Mammary epithelial cell (primary cell): ENCODE measurements at regions of chr2 and their contacts with region 1.

Region 1: GRCh38 chr2:45806563-45807358 is 155.3 kb downstream of the PRKCE start:
- DNase-seq: no peak
- H3K4me3 ChIP-seq: no peak overlapping the region
- H3K27ac ChIP-seq: no peak overlapping the region
- H3K4me1 ChIP-seq: peaks cover under 1% of the 10 kb centered on the region
- H3K27me3 ChIP-seq: no peaks in the 10 kb centered on the region
- CTCF ChIP-seq: no peak

Region 2: DNA sequence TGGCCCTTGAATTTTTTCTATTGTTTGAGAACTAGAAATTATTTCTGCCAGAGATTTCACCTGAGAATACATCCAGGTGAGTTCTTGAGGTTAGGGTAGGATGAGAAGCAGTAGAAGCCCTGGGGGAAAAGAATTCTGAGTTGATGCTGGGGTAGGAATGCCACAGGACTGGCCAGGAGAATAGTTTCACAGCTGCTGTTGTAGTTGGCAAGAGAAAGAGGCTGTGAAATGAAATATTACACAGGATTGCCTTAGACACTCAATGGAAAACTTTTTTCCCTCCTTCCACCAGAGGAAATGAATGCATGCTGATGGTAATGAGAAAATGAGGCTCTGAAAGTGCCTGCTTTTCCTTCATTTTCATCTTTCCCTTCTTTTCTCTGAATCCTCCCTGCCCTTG is 100.7 kb before region 1 on chr2:
- CTCF ChIA-PET with region 1: no interaction called
- dilution Hi-C with region 1: loop called (anchors 5 kb)
- in situ Hi-C with region 1: no loop called
- intact Hi-C with region 1: no loop called
- DNase-seq: no peak
- H3K4me3 ChIP-seq: no peak overlapping the region
- H3K27ac ChIP-seq: no peak overlapping the region
- H3K4me1 ChIP-seq: no peaks in the 10 kb centered on the region
- H3K27me3 ChIP-seq: no peaks in the 10 kb centered on the region
- CTCF ChIP-seq: no peak

Region 3: DNA sequence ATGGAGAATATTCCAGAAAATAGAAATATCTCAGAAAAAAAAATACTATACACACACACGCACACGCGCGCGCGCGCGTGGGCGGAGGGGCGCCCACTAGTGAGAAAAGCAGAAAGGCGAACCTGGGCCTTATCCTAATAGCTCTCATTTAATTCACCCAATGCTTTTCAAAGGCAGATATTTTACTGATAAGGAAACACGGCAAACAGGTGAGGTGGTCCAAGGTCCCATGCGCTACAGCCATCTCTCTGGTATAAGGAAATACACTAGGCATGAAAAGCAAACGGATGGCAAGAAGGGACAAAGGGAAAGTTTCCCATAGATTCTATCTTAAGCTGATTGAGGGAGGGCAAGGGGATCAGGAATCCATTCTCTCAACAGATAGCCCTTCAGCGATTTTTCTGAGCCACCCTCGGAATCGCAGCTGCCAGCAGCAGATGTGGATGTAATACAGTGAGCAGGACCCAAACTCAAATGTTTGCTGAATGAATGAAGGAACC is 809.3 kb after region 1 on chr2:
- CTCF ChIA-PET with region 1: no interaction called
- dilution Hi-C with region 1: no loop called
- in situ Hi-C with region 1: no loop called
- intact Hi-C with region 1: no loop called
- DNase-seq: no peak
- H3K4me3 ChIP-seq: peak overlapping the region; percentile 66 to 91 (median 84)
- H3K27ac ChIP-seq: peak overlapping the region; percentile 79
- H3K4me1 ChIP-seq: peaks cover 16% of the 10 kb centered on the region
- H3K27me3 ChIP-seq: no peaks in the 10 kb centered on the region
- CTCF ChIP-seq: peak in 1 of 2 donors; percentile 6